ENCODE measurements at regions of chr10 and their contacts with region 1.

Region 1: GRCh38 chr10:78579995-78580394 is 488.8 kb upstream of the ZMIZ1 start:
- DNase-seq: no peak
- H3K4me3 Mint-ChIP-seq: no peak overlapping the region
- H3K27ac Mint-ChIP-seq: no peak overlapping the region
- H3K4me1 Mint-ChIP-seq: peaks cover 18% of the 10 kb centered on the region
- H3K27me3 Mint-ChIP-seq: peaks cover 2% of the 10 kb centered on the region

Region 2: GRCh38 chr10:78543749-78544362 is 36.1 kb before region 1 on chr10:
- intact Hi-C with region 1: loop called (anchors 2 kb)
- DNase-seq: no peak
- H3K4me3 Mint-ChIP-seq: no peak overlapping the region
- H3K27ac Mint-ChIP-seq: no peak overlapping the region
- H3K4me1 Mint-ChIP-seq: peaks cover 10% of the 10 kb centered on the region
- H3K27me3 Mint-ChIP-seq: peaks cover 10% of the 10 kb centered on the region

Region 3: DNA sequence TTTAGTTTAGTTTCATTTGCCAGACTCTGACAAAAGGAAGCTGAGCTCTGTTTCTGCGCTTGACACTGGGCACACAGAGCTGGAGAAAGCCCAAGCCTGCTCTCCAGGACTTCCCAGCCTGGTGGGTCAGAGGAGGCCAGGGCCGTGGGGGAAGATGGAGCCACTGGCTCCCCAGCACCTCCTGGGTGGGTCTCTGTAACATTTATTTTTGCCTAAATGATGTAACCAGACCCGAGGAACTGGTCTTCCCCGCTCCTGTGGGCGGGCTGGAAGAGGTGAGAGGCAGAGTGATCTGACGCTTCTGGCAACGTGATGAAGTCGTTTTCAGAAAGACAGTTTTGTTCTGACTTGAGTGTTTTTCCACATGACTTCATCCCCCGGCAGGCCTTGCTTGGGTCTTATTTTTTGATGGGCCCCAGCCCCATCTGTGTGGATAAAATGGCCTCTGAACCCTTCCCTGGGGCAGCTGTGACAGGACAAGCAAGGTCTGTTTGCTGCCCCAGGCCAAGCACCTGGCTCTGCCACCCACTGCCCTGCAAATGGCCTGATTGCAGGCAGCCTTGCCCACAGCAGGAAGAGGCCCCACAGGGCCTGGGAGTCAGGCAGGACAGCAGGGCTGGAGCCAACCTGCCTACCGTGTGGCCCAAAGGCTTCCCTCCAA is 183.8 kb after region 1 on chr10:
- intact Hi-C with region 1: loop called (anchors 1 kb)
- DNase-seq: no peak
- H3K4me3 Mint-ChIP-seq: no peak overlapping the region
- H3K27ac Mint-ChIP-seq: peak overlapping the region; percentile 89
- H3K4me1 Mint-ChIP-seq: peaks cover 15% of the 10 kb centered on the region
- H3K27me3 Mint-ChIP-seq: no peaks in the 10 kb centered on the region

Region 4: DNA sequence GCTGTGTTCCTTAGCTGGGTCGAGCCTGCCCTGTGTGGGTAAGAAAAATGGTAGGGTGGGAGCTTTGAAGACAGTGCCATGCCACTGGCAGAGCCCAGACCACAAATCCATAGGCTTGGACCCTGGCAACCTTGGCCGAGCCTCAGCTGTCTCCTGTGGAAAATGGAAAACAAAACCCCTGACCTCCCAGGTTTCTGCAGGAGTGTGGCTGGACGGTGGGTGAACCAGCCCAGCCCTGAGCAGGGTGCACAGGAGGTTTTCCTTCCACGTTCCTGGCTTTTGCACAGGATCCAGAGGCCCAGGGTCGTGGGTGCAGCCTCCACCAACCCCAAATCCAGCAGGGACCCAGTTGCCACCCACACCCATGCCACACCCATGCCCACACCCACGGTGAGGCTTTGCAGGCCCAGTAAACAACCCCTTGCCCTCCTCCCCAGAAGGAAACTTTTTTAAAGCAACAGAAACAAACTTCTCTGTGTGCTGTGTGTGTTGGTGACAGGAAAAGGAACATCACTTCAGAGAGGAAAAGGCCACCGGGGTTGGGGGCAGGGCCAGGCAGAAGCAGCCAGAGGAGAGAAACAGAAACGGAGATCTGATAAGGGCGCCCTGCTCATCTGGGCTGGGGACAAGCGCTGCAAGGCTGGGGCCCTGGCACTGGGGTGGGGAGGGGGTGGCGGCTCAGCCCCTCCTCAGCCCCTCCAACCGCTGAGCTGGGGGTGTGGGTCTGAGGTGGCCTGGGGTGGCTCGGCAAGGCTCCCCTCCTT is 468.1 kb after region 1 on chr10:
- intact Hi-C with region 1: loop called (anchors 5 kb)
- DNase-seq: peak; percentile 75
- H3K4me3 Mint-ChIP-seq: peak overlapping the region; percentile 69
- H3K27ac Mint-ChIP-seq: peak overlapping the region; percentile 97
- H3K4me1 Mint-ChIP-seq: peaks cover 35% of the 10 kb centered on the region
- H3K27me3 Mint-ChIP-seq: peaks cover 3% of the 10 kb centered on the region

Measured in activated T-helper 2 cell treated with anti-CD3 and anti-CD28 coated beads, Interferon-gamma antibody, Interleukin-2, Interleukin-4, amounts not matched to agents 10 μg/mL and 5 μg/mL and 100 μg/mL, durations not matched to agents 14 hours and 24 hours and 36 hours (primary cell).